Naive thymus-derived CD4-positive, alpha-beta T cell (primary cell): ENCODE measurements at regions of chr7 and their contacts with region 1.

Region 1: GRCh38 chr7:101363734-101364374 is 1.2 kb downstream of the COL26A1 start:
- DNase-seq: peak; percentile 42 to 84 (median 71)
- ATAC-seq: peak; percentile 96
- H3K4me3 ChIP-seq: peak overlapping the region; percentile 63
- H3K4me3 Mint-ChIP-seq: peak overlapping the region in 8 of 10 donors; percentile 20 to 74 (median 57)
- H3K27ac ChIP-seq: no peak overlapping the region
- H3K27ac Mint-ChIP-seq: no peak overlapping the region
- H3K4me1 ChIP-seq: peaks cover 0 to 6% of the 10 kb centered on the region in 2 donors
- H3K4me1 Mint-ChIP-seq: peaks cover 0 to 6% (median 3%) of the 10 kb centered on the region in 7 donors
- H3K27me3 ChIP-seq: peaks cover 0 to 3% of the 10 kb centered on the region in 2 donors
- H3K27me3 Mint-ChIP-seq: peaks cover 13 to 36% (median 20%) of the 10 kb centered on the region in 5 donors

Region 2: GRCh38 chr7:101333912-101334311 is 29.9 kb before region 1 on chr7:
- CTCF ChIA-PET with region 1: no interaction called
- POLR2A ChIA-PET with region 1: no interaction called
- intact Hi-C with region 1: no loop called
- DNase-seq: no peak
- ATAC-seq: no peak
- H3K4me3 ChIP-seq: no peak overlapping the region
- H3K4me3 Mint-ChIP-seq: no peak overlapping the region
- H3K27ac ChIP-seq: no peak overlapping the region
- H3K27ac Mint-ChIP-seq: no peak overlapping the region
- H3K4me1 ChIP-seq: no peaks in the 10 kb centered on the region
- H3K4me1 Mint-ChIP-seq: no peaks in the 10 kb centered on the region
- H3K27me3 ChIP-seq: no peaks in the 10 kb centered on the region
- H3K27me3 Mint-ChIP-seq: peaks cover 0 to 4% (median 0%) of the 10 kb centered on the region in 5 donors

Region 3: DNA sequence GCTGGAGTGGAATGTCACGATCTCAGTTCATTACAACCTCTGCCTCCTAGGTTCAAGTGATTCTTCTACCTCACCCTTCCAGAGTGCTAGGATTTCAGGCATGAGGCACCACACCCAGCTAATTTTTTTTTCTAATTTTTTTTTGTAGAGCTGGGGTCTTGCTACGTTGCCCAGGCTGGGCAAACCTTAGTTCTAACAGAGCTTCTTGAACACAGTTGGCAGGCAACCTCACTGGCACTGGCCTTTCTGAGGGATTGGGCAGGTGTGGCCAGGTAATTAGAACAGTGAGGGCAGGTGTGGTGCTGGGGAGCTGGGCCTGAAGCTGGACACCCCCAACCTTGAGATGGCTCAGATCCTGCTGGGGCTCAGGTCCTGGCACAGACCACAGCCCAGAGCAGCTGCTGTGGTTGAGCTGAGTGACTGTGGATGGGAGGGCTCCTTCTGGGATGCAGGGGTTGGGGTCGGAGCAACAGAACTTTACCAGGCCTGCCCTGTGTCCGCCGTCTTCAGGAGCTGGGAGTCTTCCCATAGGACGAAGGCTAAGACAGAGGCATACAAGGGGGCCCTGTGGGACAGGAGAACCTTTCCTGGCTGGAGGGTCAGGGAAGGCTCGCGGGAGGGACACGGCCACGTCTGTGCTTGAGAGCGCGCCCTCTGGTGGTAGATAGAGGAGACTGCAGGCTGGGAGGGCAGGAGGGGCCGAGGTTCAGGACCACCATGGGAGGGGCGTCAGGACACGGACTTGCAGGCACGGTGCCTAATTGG is 47.1 kb after region 1 on chr7:
- CTCF ChIA-PET with region 1: interaction called, 36 read pairs
- POLR2A ChIA-PET with region 1: no interaction called
- intact Hi-C with region 1: loop called (anchors 1 kb)
- DNase-seq: peak in 7 of 9 donors; percentile 27 to 55 (median 33)
- ATAC-seq: peak; percentile 64
- H3K4me3 ChIP-seq: no peak overlapping the region
- H3K4me3 Mint-ChIP-seq: peak overlapping the region in 5 of 10 donors; percentile 40 to 74 (median 55)
- H3K27ac ChIP-seq: no peak overlapping the region
- H3K27ac Mint-ChIP-seq: no peak overlapping the region
- H3K4me1 ChIP-seq: no peaks in the 10 kb centered on the region
- H3K4me1 Mint-ChIP-seq: peaks cover 5 to 11% (median 7%) of the 10 kb centered on the region in 7 donors
- H3K27me3 ChIP-seq: no peaks in the 10 kb centered on the region
- H3K27me3 Mint-ChIP-seq: peaks cover 0 to 9% (median 4%) of the 10 kb centered on the region in 5 donors

Region 4: DNA sequence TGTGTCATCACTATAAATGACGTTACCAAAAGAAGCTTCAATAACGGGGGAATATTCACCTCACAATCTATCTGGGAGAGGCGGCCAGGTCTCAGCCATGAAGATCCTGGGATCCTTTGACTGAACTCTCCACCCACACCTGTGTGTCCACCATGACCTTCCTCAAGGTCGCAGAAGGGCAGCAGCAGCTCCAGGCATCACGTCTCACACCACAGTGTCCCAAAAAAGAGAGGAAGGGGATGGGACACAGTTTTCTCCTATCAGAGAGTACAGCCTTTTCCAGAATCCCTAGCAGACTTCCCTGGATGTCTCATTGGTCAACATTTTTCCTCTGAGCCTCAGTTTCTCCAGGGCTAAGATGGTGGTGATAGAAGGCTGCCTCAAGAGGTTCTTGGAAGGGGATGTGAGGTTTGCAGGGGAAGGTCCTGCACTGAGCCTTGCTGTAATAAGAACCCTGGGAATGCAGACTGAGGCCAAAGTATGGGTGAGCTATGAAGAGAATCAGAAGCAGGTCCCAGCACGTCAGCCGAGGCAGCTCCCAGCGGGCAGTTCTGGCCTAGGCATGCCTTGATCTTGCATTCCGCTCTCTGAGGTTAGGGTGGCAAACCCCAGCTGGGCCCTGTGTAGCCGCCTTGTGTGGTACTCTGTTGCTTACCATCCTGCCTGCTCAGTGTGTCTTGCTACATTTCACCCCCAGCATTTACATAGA is 62.6 kb after region 1 on chr7:
- CTCF ChIA-PET with region 1: no interaction called
- POLR2A ChIA-PET with region 1: no interaction called
- intact Hi-C with region 1: no loop called
- DNase-seq: no peak
- ATAC-seq: no peak
- H3K4me3 ChIP-seq: no peak overlapping the region
- H3K4me3 Mint-ChIP-seq: no peak overlapping the region
- H3K27ac ChIP-seq: no peak overlapping the region
- H3K27ac Mint-ChIP-seq: no peak overlapping the region
- H3K4me1 ChIP-seq: no peaks in the 10 kb centered on the region
- H3K4me1 Mint-ChIP-seq: peaks cover 0 to 6% (median 0%) of the 10 kb centered on the region in 7 donors
- H3K27me3 ChIP-seq: no peaks in the 10 kb centered on the region
- H3K27me3 Mint-ChIP-seq: peaks cover 0 to 14% (median 4%) of the 10 kb centered on the region in 5 donors

Region 5: DNA sequence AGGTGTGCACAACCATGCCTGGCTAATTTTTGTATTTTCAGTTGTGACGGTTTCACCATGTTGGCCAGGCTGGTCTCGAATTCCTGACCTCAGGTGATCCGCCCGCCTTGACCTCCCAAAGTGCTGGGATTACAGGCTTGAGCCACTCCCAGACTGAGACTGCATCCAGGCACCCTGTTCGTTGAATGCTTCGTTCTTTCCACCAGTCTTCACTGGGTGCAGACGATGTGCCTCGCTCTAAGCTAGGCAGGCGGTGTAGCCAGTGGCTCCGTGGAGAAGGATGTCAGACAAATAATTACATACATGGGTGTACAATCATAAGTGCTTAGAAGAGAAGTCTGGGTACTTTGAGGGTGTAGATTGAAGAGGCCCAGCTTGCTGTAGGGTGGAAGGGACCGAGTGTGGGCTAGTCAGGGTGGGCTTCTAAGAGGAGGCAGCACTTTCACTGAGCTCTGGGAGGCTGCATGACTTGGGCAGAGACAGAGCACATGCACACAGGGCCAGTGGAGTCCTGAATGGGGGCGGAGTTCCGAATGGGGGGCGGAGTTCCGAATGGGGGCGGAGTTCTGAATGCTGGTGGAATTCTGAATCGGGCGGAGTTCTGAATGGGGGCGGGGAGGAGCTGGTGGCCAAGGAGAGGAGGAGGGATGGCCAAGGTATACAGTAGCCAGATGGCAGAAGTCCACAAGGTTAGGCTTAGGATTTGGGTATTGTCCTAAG is 73.2 kb after region 1 on chr7:
- CTCF ChIA-PET with region 1: interaction called, 11 read pairs
- POLR2A ChIA-PET with region 1: no interaction called
- intact Hi-C with region 1: loop called in 1 of 2 experiments (anchors 1 kb)
- DNase-seq: no peak
- ATAC-seq: no peak
- H3K4me3 ChIP-seq: no peak overlapping the region
- H3K4me3 Mint-ChIP-seq: no peak overlapping the region
- H3K27ac ChIP-seq: no peak overlapping the region
- H3K27ac Mint-ChIP-seq: no peak overlapping the region
- H3K4me1 ChIP-seq: no peaks in the 10 kb centered on the region
- H3K4me1 Mint-ChIP-seq: peaks cover 0 to 6% (median 0%) of the 10 kb centered on the region in 7 donors
- H3K27me3 ChIP-seq: no peaks in the 10 kb centered on the region
- H3K27me3 Mint-ChIP-seq: peaks cover 3 to 38% (median 24%) of the 10 kb centered on the region in 5 donors

Region 6: DNA sequence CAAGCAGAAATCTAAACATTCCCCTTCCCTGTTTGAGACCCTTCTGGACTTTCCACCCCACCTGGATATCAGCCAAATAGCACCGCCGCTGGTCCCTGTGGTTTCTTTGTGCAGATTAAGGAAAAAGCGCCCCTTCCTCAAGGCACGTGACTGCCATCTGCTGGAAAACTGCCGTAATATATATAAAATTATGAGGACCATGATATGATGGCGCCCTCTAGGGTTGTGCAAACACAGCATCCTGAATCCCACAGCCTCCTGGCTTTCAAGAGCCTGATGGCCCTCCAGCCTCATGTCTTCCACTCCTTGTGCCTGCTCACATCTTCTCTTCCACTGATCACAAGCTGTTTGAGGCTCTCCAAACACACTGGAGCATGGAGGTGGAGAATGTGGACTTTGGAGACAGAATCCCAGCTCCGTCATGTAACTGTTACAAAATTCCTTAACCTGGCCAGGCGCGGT is 144.0 kb after region 1 on chr7:
- CTCF ChIA-PET with region 1: interaction called, 3 read pairs
- POLR2A ChIA-PET with region 1: no interaction called
- intact Hi-C with region 1: loop called (anchors 1 kb)
- DNase-seq: peak in 7 of 9 donors; percentile 13 to 46 (median 28)
- ATAC-seq: peak; percentile 43
- H3K4me3 ChIP-seq: no peak overlapping the region
- H3K4me3 Mint-ChIP-seq: peak overlapping the region in 8 of 10 donors; percentile 18 to 72 (median 48)
- H3K27ac ChIP-seq: no peak overlapping the region
- H3K27ac Mint-ChIP-seq: peak overlapping the region in 1 of 9 donors; percentile 36
- H3K4me1 ChIP-seq: no peaks in the 10 kb centered on the region
- H3K4me1 Mint-ChIP-seq: peaks cover 5 to 20% (median 8%) of the 10 kb centered on the region in 7 donors
- H3K27me3 ChIP-seq: no peaks in the 10 kb centered on the region
- H3K27me3 Mint-ChIP-seq: peaks cover 9 to 24% (median 16%) of the 10 kb centered on the region in 5 donors

Region 7: DNA sequence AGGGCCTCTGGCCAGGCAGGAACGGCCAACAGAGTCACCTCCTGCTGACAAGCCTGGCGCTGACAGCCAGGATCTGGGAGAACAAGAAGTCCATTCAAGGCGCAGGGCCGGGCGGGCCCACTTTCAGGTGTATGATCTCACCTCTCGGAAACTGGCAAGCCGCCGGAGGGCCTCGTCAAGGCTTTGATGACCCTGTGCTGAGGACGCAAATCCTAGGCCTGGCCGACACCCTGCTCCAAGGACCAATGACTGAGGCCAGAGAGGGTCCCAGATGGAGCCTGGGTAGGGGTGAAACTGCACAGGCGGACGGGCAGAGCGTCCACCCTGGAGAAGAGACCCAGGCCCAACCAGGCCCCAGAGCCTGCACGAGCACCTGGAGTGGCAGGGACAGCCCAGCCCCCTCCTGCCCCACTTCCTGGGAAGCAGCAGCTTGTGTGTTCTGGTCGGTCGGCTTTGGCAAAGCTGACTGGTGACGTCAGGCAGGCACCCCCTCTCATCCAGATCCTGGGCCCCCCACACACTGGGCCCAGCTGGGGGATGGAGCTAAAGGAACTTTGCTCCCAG is 234.7 kb after region 1 on chr7:
- CTCF ChIA-PET with region 1: no interaction called
- POLR2A ChIA-PET with region 1: no interaction called
- intact Hi-C with region 1: no loop called
- DNase-seq: no peak
- ATAC-seq: no peak
- H3K4me3 ChIP-seq: no peak overlapping the region
- H3K4me3 Mint-ChIP-seq: no peak overlapping the region
- H3K27ac ChIP-seq: no peak overlapping the region
- H3K27ac Mint-ChIP-seq: no peak overlapping the region
- H3K4me1 ChIP-seq: no peaks in the 10 kb centered on the region
- H3K4me1 Mint-ChIP-seq: no peaks in the 10 kb centered on the region
- H3K27me3 ChIP-seq: no peaks in the 10 kb centered on the region
- H3K27me3 Mint-ChIP-seq: peaks cover 0 to 6% (median 0%) of the 10 kb centered on the region in 5 donors

Region 8: DNA sequence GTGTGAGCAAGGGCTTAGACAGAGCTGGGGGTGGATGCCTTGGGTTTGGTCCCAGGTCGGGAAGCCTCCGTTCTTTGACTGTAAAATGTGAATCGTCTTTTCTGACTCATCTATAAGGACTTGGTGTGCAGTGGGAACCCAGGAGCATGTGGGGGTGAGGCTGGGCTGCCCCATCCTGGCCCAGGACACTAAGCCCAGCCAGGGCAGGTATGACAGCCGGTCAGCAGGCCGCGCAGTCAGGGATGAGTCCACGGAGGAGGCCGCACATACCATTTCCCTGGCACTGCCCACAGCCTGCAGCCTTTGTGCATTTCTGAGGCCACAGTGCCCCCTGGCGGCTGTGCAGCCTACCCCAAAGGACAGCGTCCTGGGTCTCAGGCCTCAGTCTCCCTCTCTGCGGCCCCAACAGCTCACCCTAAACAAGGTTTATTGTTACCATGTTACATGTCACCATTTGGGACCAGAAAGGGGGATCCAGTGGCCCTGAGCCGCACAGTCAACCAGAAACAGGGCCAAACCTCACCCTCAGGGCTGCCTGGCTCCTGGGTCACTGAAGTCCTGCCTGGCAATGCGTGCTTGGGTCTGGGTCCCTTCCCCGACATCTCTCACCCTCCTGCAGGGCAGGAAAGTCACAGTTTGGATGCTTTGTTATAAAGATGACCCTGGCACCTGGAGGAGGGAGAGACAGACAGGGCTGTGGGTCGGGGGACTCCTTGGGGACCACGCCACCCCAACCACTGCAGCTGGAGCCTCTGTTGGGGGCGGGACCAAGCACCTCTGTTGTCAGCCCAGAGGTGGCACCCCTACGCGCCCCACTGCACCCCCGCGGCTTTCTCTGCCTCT is 908.4 kb after region 1 on chr7:
- CTCF ChIA-PET with region 1: no interaction called
- POLR2A ChIA-PET with region 1: no interaction called
- intact Hi-C with region 1: loop called in 1 of 2 experiments (anchors 1 kb)
- DNase-seq: peak; percentile 34 to 78 (median 69)
- ATAC-seq: peak; percentile 83
- H3K4me3 ChIP-seq: no peak overlapping the region
- H3K4me3 Mint-ChIP-seq: no peak overlapping the region
- H3K27ac ChIP-seq: no peak overlapping the region
- H3K27ac Mint-ChIP-seq: no peak overlapping the region
- H3K4me1 ChIP-seq: no peaks in the 10 kb centered on the region
- H3K4me1 Mint-ChIP-seq: peaks cover 0 to 4% (median 0%) of the 10 kb centered on the region in 7 donors
- H3K27me3 ChIP-seq: no peaks in the 10 kb centered on the region
- H3K27me3 Mint-ChIP-seq: no peaks in the 10 kb centered on the region